ENCODE measurements at regions of chr9 and their contacts with region 1.

Region 1: GRCh38 chr9:76987594-76988200 is 31.8 kb upstream of the FOXB2 start:
- DNase-seq: peak; percentile 33
- H3K4me3 ChIP-seq: no peak overlapping the region
- H3K27ac ChIP-seq: no peak overlapping the region
- H3K4me1 ChIP-seq: no peaks in the 10 kb centered on the region
- H3K27me3 ChIP-seq: peaks cover 24% of the 10 kb centered on the region
- CTCF ChIP-seq: peak; percentile 50

Region 2: GRCh38 chr9:76761448-76761847 is 226.2 kb before region 1 on chr9:
- CTCF ChIA-PET with region 1: no interaction called
- POLR2A ChIA-PET with region 1: interaction called, 7 read pairs
- intact Hi-C with region 1: loop called (anchors 5 kb)
- DNase-seq: peak; percentile 2
- H3K4me3 ChIP-seq: no peak overlapping the region
- H3K27ac ChIP-seq: no peak overlapping the region
- H3K4me1 ChIP-seq: no peaks in the 10 kb centered on the region
- H3K27me3 ChIP-seq: no peaks in the 10 kb centered on the region
- CTCF ChIP-seq: peak; percentile 50

Region 3: GRCh38 chr9:76893395-76893932 is 94.2 kb before region 1 on chr9:
- CTCF ChIA-PET with region 1: no interaction called
- POLR2A ChIA-PET with region 1: no interaction called
- intact Hi-C with region 1: loop called (anchors 10 kb)
- DNase-seq: no peak
- H3K4me3 ChIP-seq: no peak overlapping the region
- H3K27ac ChIP-seq: no peak overlapping the region
- H3K4me1 ChIP-seq: no peaks in the 10 kb centered on the region
- H3K27me3 ChIP-seq: peaks cover 30% of the 10 kb centered on the region
- CTCF ChIP-seq: no peak

Region 4: DNA sequence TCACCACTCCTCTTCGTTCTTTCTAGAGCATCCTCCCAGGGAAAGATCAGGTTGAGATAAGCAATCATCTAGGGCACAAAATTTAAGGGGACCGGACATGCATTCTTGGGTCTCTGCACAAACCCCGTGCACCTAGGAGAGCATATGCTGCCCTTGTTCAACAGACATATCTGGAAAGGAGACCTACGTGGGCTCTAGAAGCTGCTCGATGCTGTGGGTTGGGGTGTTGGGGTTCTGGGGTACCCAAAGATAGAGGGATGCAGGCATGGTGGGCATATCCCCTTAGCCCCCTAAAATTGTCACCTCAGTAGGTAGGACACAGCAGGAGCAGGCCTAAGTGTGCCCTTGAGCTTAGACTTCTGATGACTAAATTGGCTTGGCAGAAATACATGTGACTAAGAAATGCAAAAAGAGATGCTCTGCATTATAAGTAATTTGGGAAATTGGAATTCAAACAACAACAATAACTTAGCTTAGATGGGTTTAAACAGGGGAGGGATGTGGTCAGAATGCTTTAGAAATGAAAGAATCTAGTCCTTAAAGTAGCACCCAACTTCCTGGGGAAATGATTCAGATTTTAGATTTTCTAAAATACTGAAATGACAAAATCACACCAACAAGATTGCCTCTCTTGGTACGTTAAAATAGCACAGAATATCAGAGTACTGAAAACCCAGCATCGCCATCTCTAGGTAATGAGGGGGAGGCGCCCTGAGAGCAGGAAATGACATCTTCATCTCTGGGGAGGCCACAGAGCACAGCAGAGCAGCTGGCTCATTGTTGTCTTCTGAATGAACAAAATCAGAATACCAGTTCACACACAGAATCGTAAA is 488.2 kb after region 1 on chr9:
- CTCF ChIA-PET with region 1: no interaction called
- POLR2A ChIA-PET with region 1: no interaction called
- intact Hi-C with region 1: no loop called
- DNase-seq: peak; percentile 90
- H3K4me3 ChIP-seq: no peak overlapping the region
- H3K27ac ChIP-seq: peak overlapping the region; percentile 85
- H3K4me1 ChIP-seq: peaks cover 14% of the 10 kb centered on the region
- H3K27me3 ChIP-seq: no peaks in the 10 kb centered on the region
- CTCF ChIP-seq: no peak